Psoas muscle (tissue), 8 donors: ENCODE measurements at regions of chr15 and their contacts with region 1.

Region 1: GRCh38 chr15:70196314-70197291 is 98.9 kb upstream of the TLE3 start:
- DNase-seq: peak; percentile 86 to 94
- ATAC-seq: peak; percentile 83 to 88 (median 86)
- H3K4me3 ChIP-seq: peak overlapping the region; percentile 12
- H3K27ac ChIP-seq: peak overlapping the region; percentile 93
- H3K4me1 ChIP-seq: peaks cover 41% of the 10 kb centered on the region
- H3K27me3 ChIP-seq: no peaks in the 10 kb centered on the region
- CTCF ChIP-seq: no peak

Region 2: DNA sequence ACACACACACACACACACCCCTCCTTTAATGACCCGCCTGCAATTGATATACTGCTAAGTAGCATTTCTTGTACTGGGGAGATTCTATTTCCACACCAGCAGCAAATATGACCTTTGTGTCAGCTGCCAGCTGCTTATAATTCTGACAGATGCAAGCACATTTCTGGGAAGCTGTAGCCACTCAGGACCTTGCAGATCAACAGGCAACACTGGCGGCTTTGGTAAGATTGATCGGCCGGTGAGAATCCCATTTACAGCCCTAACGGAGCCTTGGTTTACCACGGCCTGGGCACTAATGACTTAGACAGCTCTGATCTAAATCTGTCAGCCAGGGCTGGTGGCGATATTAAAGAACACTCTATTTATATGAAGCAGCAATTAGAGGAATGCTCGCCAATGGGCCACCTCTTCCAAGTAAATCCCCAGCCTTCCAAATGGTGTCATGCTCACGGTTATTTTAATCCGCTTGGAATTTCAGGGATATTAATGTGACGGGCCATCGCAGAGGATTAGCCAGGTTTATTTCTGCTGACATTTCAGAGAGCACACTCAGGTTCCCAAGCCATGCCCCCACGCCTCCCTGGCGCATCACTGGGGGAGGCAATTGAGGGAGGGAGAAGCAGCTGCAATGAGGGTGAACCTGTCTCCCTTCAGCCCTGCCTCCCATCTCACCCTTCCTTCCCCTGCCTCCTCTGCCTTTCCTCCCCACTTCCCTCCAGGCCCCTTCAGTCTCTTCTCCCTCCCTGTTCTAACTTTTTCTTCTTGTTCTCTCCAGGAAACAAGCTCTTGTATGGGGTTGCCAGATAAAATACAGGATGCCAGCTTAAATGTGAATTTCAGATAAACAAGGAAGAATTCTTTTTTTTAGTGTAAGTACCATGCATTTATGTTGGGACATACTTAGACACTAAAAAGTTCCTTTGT is 385.9 kb before region 1 on chr15:
- intact Hi-C with region 1: loop called in 1 of 2 experiments (anchors 10 kb)
- DNase-seq: peak; percentile 40 to 67
- ATAC-seq: peak; percentile 81 to 87 (median 86)
- H3K4me3 ChIP-seq: no peak overlapping the region
- H3K27ac ChIP-seq: peak overlapping the region; percentile 77
- H3K4me1 ChIP-seq: peaks cover 11% of the 10 kb centered on the region
- H3K27me3 ChIP-seq: peaks cover 0 to 5% (median 0%) of the 10 kb centered on the region in 3 donors
- CTCF ChIP-seq: no peak

Region 3: DNA sequence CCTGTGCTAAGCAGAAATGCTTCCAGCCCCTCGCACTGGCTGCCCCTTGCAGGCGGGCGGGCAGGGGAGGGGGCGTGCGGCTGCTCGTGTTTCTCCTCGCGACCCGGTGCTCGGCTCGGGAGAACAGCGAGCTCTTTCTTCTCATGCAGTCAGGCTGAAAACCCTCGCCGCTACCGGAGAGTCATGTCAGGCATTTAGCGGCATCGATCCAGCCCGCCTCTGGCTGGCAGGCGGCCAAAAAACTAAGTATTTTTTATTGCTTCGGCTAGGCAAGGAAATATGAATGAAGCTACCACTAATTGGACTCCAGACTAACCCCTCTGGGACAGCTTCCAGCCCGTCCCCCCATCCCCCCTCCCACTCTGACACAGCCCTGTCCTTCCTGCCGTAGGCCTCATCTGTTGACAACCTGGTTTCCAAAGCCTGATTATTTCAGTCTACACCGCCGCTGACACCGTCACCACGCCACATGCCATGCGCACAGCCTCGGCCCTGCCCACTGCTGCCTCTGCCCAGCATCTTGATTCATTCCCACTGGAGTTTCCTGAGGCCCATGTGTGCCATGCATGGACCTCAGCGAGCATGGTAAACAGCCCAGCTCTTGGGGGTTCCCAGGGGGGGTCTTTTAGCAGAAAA is 134.2 kb before region 1 on chr15:
- intact Hi-C with region 1: no loop called
- DNase-seq: peak; percentile 59 to 77
- ATAC-seq: peak; percentile 81 to 94 (median 90)
- H3K4me3 ChIP-seq: peak overlapping the region; percentile 43
- H3K27ac ChIP-seq: peak overlapping the region; percentile 51
- H3K4me1 ChIP-seq: peaks cover 19% of the 10 kb centered on the region
- H3K27me3 ChIP-seq: no peaks in the 10 kb centered on the region
- CTCF ChIP-seq: no peak

Region 4: GRCh38 chr15:70156671-70157271 is 39.8 kb before region 1 on chr15:
- intact Hi-C with region 1: loop called (anchors 2 to 5 kb)
- DNase-seq: peak; percentile 79 to 89
- ATAC-seq: peak; percentile 82 to 88 (median 86)
- H3K4me3 ChIP-seq: peak overlapping the region; percentile 37
- H3K27ac ChIP-seq: peak overlapping the region; percentile 87
- H3K4me1 ChIP-seq: peaks cover 47% of the 10 kb centered on the region
- H3K27me3 ChIP-seq: no peaks in the 10 kb centered on the region
- CTCF ChIP-seq: no peak

Region 5: GRCh38 chr15:70281811-70282307 is 85.3 kb after region 1 on chr15:
- intact Hi-C with region 1: no loop called
- DNase-seq: no peak
- ATAC-seq: peak in 3 of 4 donors; percentile 50 to 74 (median 56)
- H3K4me3 ChIP-seq: no peak overlapping the region
- H3K27ac ChIP-seq: no peak overlapping the region
- H3K4me1 ChIP-seq: no peaks in the 10 kb centered on the region
- H3K27me3 ChIP-seq: no peaks in the 10 kb centered on the region
- CTCF ChIP-seq: no peak

Region 6: GRCh38 chr15:70474471-70475396 is 278.1 kb after region 1 on chr15:
- intact Hi-C with region 1: loop called in 1 of 2 experiments (anchors 10 kb)
- DNase-seq: peak; percentile 88
- ATAC-seq: peak; percentile 87 to 90 (median 89)
- H3K4me3 ChIP-seq: peak overlapping the region; percentile 46
- H3K27ac ChIP-seq: peak overlapping the region; percentile 81
- H3K4me1 ChIP-seq: peaks cover 23% of the 10 kb centered on the region
- H3K27me3 ChIP-seq: no peaks in the 10 kb centered on the region
- CTCF ChIP-seq: no peak